Caco-2 (cell line): ENCODE measurements at regions of chr13 and their contacts with region 1.

Region 1: GRCh38 chr13:44050450-44051063 is 170.9 kb downstream of the LACC1 start:
- DNase-seq: peak in 1 of 2 experiments; percentile 43
- H3K4me3 ChIP-seq: no peak overlapping the region
- H3K4me3 Mint-ChIP-seq: no peak overlapping the region
- H3K27ac Mint-ChIP-seq: no peak overlapping the region
- H3K4me1 ChIP-seq: peaks cover 42% of the 10 kb centered on the region
- H3K4me1 Mint-ChIP-seq: peaks cover 36% of the 10 kb centered on the region
- H3K27me3 ChIP-seq: no peaks in the 10 kb centered on the region
- H3K27me3 Mint-ChIP-seq: no peaks in the 10 kb centered on the region
- CTCF ChIP-seq: peak; percentile 70 to 78

Region 2: DNA sequence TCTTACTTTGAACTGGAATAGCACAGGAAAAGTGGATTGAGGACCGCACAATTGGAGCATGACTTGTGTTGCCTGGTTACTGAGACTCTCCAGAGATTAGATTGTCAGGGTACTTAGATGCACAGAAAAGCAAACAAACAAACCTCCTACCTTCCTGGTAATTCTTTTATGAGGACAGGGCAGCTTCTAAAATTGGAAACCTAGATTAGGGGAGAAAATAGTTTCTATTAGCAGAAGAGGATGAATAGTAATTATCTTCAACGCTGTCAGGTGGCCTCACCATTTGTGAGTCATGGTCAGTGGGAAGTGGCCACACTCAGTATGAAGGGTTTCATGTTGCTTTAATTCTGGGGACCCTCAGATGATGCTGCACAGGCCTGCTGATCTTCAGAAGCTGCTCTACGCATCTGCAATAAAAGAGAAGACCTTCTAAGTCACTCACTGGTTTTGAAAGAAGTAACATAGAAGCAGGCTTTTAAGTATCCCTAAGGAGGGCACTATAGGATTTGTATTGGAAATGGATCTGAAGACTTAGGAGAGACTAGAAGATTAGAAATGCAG is 64.1 kb before region 1 on chr13:
- CTCF ChIA-PET with region 1: no interaction called
- POLR2A ChIA-PET with region 1: no interaction called
- intact Hi-C with region 1: loop called (anchors 5 kb)
- DNase-seq: no peak
- H3K4me3 ChIP-seq: no peak overlapping the region
- H3K4me3 Mint-ChIP-seq: no peak overlapping the region
- H3K27ac Mint-ChIP-seq: no peak overlapping the region
- H3K4me1 ChIP-seq: no peaks in the 10 kb centered on the region
- H3K4me1 Mint-ChIP-seq: peaks cover 7% of the 10 kb centered on the region
- H3K27me3 ChIP-seq: no peaks in the 10 kb centered on the region
- H3K27me3 Mint-ChIP-seq: no peaks in the 10 kb centered on the region
- CTCF ChIP-seq: no peak

Region 3: DNA sequence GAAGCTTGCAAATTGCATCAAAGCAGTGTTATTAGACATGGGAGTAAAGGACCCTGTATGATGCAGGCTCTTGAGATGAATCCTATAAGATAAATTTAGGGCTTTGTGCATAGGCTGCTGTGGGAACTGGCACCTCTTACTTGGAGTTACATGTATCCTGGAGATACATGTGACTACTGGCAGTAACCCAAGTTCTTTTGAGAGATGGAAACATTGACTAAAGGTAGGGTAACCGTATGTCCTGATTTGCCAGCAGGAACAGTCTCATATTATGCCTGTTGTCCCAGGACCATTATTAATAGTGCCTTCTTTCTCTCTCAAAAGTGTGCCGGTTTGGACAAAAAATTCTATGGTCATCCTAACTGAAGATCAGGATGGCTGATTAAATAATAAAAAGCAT is 24.6 kb after region 1 on chr13:
- CTCF ChIA-PET with region 1: no interaction called
- POLR2A ChIA-PET with region 1: no interaction called
- intact Hi-C with region 1: no loop called
- DNase-seq: no peak
- H3K4me3 ChIP-seq: no peak overlapping the region
- H3K4me3 Mint-ChIP-seq: no peak overlapping the region
- H3K27ac Mint-ChIP-seq: no peak overlapping the region
- H3K4me1 ChIP-seq: peaks cover 17% of the 10 kb centered on the region
- H3K4me1 Mint-ChIP-seq: peaks cover 23% of the 10 kb centered on the region
- H3K27me3 ChIP-seq: no peaks in the 10 kb centered on the region
- H3K27me3 Mint-ChIP-seq: no peaks in the 10 kb centered on the region
- CTCF ChIP-seq: no peak

Region 4: DNA sequence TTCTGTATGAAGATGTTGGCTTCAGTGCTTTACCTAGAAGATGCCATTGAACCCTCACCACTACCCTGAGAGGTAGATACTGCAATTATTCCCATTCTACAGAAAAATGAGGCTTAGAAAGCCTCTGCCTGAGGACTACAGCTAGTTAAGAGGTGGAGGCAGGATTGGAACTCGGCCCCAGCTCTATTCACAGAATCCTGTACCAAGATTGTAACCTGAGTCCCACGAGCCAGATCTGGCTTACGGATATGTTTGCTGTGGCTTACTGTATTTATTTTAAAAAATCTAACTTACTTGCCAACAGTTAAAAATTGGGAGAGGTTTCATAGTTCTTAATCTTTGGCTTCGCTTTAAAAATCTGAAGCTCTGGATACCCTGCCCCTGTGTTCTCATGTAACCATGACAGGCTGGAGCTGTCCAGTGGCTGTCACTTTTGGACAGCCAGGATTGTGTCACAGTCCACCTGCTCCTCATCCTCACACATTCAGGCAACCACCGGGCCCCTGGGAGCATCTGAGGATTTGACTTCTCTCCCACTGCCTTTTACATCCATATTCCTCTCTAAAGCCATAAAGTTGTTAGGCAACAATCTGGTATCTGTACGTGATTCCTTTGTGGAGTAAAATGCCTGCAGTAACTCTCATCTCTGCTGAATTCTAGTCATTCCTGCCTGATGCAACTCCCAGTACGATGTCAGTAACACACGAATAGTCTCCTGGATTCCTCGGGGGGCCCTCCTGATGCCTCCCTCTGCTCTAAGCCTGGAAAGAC is 162.3 kb after region 1 on chr13:
- CTCF ChIA-PET with region 1: no interaction called
- POLR2A ChIA-PET with region 1: no interaction called
- intact Hi-C with region 1: loop called (anchors 1 kb)
- DNase-seq: peak; percentile 85 to 90
- H3K4me3 ChIP-seq: no peak overlapping the region
- H3K4me3 Mint-ChIP-seq: peak overlapping the region; percentile 47
- H3K27ac Mint-ChIP-seq: peak overlapping the region; percentile 97
- H3K4me1 ChIP-seq: peaks cover 18% of the 10 kb centered on the region
- H3K4me1 Mint-ChIP-seq: peaks cover 36% of the 10 kb centered on the region
- H3K27me3 ChIP-seq: no peaks in the 10 kb centered on the region
- H3K27me3 Mint-ChIP-seq: no peaks in the 10 kb centered on the region
- CTCF ChIP-seq: no peak

Region 5: GRCh38 chr13:44280456-44280855 is 229.9 kb after region 1 on chr13:
- CTCF ChIA-PET with region 1: interaction called, 3 read pairs
- POLR2A ChIA-PET with region 1: no interaction called
- intact Hi-C with region 1: loop called (anchors 5 kb)
- DNase-seq: no peak
- H3K4me3 ChIP-seq: no peak overlapping the region
- H3K4me3 Mint-ChIP-seq: no peak overlapping the region
- H3K27ac Mint-ChIP-seq: peak overlapping the region; percentile 86
- H3K4me1 ChIP-seq: peaks cover 52% of the 10 kb centered on the region
- H3K4me1 Mint-ChIP-seq: peaks cover 39% of the 10 kb centered on the region
- H3K27me3 ChIP-seq: no peaks in the 10 kb centered on the region
- H3K27me3 Mint-ChIP-seq: no peaks in the 10 kb centered on the region
- CTCF ChIP-seq: no peak